ENCODE measurements at regions of chr22 and their contacts with region 1.

Region 1: GRCh38 chr22:45645526-45646414 is 25.9 kb upstream of the ATXN10 start:
- DNase-seq: peak; percentile 37 to 96 (median 76)

Region 2: GRCh38 chr22:45201678-45202332 is 444.0 kb before region 1 on chr22:
- intact Hi-C with region 1: no loop called
- DNase-seq: peak in 3 of 10 donors; percentile 70 to 80 (median 80)

Region 3: DNA sequence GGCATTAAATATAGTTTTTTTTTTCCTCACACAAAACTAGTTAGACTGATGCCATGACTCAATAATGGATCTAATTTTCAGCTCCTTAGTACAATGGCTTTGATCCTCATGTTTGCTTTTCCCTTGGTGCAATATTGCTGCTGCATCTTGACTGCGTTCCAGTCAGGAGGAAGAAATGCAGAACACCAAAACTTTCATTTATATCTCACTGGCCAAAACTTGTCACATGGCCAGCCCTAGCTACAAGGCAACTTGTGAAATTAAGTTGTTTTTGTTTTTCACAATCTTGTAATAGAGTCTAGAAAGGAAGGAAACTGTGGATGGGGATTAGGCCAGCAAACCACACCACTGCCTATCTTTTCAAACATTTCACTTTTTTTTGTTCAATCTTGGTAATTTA is 269.1 kb before region 1 on chr22:
- intact Hi-C with region 1: no loop called
- DNase-seq: no peak

Region 4: GRCh38 chr22:45577746-45578523 is 67.8 kb before region 1 on chr22:
- intact Hi-C with region 1: loop called (anchors 10 kb)
- DNase-seq: peak; percentile 70 to 97 (median 88)

Region 5: DNA sequence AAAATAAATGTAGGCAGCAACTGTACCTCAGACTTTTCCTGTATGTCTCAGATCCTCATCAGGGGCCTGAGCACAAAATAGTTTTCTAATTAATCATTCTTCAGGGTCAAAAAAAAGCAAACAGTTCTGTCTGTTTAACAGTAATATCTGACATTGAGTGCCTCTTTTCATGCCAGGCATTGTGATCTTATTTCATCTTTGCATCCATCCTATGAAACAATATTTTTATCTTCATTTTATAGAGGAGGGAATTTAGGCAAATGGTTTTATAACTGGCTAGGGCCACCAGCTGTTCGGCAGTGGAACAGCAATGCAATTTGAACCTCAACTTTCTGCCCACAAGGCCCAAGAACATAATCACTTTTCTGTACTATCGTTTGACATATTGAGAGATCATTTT is 185.6 kb after region 1 on chr22:
- intact Hi-C with region 1: loop called (anchors 5 kb)
- DNase-seq: no peak

Measured in posterior cingulate gyrus (tissue), 11 donors.